Activated B cell treated with CpG ODN at 0.5 μM for 24 hours (primary cell): ENCODE measurements at regions of chr5 and their contacts with region 1.

Region 1: GRCh38 chr5:56893251-56893951 is 16.0 kb upstream of the SETD9 start:
- DNase-seq: no peak
- ATAC-seq: peak; percentile 25
- H3K4me3 Mint-ChIP-seq: no peak overlapping the region
- H3K27ac Mint-ChIP-seq: peak overlapping the region; percentile 57
- H3K4me1 Mint-ChIP-seq: peaks cover 15% of the 10 kb centered on the region
- H3K27me3 Mint-ChIP-seq: no peaks in the 10 kb centered on the region
- CTCF ChIP-seq: no peak

Region 2: DNA sequence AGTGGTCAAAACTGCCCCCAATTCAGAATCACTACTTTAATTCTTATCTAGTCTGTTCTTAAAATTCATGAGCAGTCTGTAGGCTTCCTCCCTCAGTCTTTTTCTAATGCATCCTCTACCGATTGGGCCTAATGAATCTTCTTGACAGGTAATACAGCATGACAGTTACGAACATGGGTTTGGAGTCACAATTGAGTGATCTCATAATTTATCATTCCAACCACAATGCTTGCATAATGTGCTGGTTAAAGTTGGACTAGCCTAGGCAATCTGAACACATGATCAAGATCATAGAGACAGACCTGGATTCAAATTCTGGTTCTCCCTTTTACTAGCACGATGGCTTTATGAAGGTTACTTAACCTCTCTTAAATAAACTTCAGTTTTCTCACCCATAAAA is 17.1 kb before region 1 on chr5:
- CTCF ChIA-PET with region 1: interaction called, 3 read pairs
- POLR2A ChIA-PET with region 1: no interaction called
- intact Hi-C with region 1: loop called (anchors 2 kb)
- DNase-seq: no peak
- ATAC-seq: no peak
- H3K4me3 Mint-ChIP-seq: no peak overlapping the region
- H3K27ac Mint-ChIP-seq: peak overlapping the region; percentile 43
- H3K4me1 Mint-ChIP-seq: peaks cover 32% of the 10 kb centered on the region
- H3K27me3 Mint-ChIP-seq: no peaks in the 10 kb centered on the region
- CTCF ChIP-seq: no peak